H1 (cell line): ENCODE measurements at regions of chr9 and their contacts with region 1.

Region 1: GRCh38 chr9:121322037-121322775 is 47.8 kb downstream of the STOM start:
- DNase-seq: no peak
- H3K4me3 ChIP-seq: no peak overlapping the region
- H3K27ac ChIP-seq: no peak overlapping the region
- H3K4me1 ChIP-seq: no peaks in the 10 kb centered on the region
- H3K27me3 ChIP-seq: no peaks in the 10 kb centered on the region
- CTCF ChIP-seq: no peak
- EP300 ChIP-seq: no peak
- POLR2A ChIP-seq: no peak
- RAD21 ChIP-seq: no peak

Region 2: GRCh38 chr9:120730661-120731514 is 591.3 kb before region 1 on chr9:
- CTCF ChIA-PET with region 1: no interaction called
- POLR2A ChIA-PET with region 1: no interaction called
- DNase-seq: no peak
- H3K4me3 ChIP-seq: no peak overlapping the region
- H3K27ac ChIP-seq: no peak overlapping the region; the same call in 1 of the 2 replicates
- H3K4me1 ChIP-seq: peaks cover 0 to 6% (median 0%) of the 10 kb centered on the region in 4 experiments; a peak in 3 of 7 replicates
- H3K27me3 ChIP-seq: no peaks in the 10 kb centered on the region
- CTCF ChIP-seq: no peak
- EP300 ChIP-seq: no peak
- POLR2A ChIP-seq: no peak
- RAD21 ChIP-seq: no peak

Region 3: GRCh38 chr9:121213136-121213806 is 108.9 kb before region 1 on chr9:
- CTCF ChIA-PET with region 1: interaction called, 34 read pairs
- POLR2A ChIA-PET with region 1: interaction called, 3 read pairs
- DNase-seq: peak; percentile 74 to 93
- H3K4me3 ChIP-seq: no peak overlapping the region
- H3K27ac ChIP-seq: no peak overlapping the region
- H3K4me1 ChIP-seq: peaks cover 0 to 6% (median 1%) of the 10 kb centered on the region in 4 experiments; a peak in 3 of 7 replicates
- H3K27me3 ChIP-seq: no peaks in the 10 kb centered on the region
- CTCF ChIP-seq: peak; percentile 96 to 98 (median 98)
- EP300 ChIP-seq: no peak
- POLR2A ChIP-seq: no peak
- RAD21 ChIP-seq: peak; percentile 100

Region 4: DNA sequence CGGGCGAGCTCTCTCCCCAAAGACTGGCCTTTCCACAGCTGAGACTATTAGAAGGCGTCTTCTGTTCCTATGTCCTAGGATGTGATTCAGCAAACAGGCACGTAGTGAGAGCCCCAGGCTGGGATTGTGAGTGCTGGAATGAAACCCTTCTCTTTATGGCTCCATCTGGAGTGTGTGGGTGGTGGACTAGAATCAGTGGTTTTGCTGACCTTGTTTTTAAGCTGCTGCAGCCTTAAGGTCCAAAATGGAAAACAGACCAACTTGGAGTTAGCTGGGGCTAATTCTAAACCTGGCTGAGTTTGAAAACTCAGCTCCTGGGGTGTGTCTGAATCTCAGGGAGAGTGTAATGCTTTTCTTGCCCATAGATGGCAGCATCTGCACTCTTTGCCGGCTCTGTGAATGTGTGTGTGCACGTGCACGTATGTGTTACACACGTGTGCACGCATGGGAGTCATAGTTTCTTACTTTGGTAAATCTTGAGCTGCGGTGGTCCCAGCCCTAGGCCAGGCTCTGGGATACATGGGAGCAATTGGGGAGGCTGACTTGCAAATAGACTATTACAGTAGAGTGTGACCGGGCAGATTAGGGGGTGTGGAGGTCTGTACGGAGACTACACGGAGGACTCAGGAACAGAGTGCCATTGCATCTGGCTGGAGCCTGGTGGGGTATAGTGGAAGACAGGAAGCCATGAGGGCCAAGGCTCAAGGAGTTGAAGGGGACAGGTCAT is 43.5 kb before region 1 on chr9:
- CTCF ChIA-PET with region 1: interaction called, 20 read pairs
- POLR2A ChIA-PET with region 1: no interaction called
- DNase-seq: no peak
- H3K4me3 ChIP-seq: no peak overlapping the region
- H3K27ac ChIP-seq: no peak overlapping the region
- H3K4me1 ChIP-seq: peaks cover 0 to 5% (median 2%) of the 10 kb centered on the region in 4 experiments; a peak in 3 of 7 replicates
- H3K27me3 ChIP-seq: peaks cover 6 to 47% (median 39%) of the 10 kb centered on the region in 4 experiments
- CTCF ChIP-seq: peak; percentile 64 to 84 (median 66)
- EP300 ChIP-seq: no peak
- POLR2A ChIP-seq: no peak
- RAD21 ChIP-seq: peak; percentile 73 to 78

Region 5: GRCh38 chr9:121305269-121305994 is 16.8 kb before region 1 on chr9:
- CTCF ChIA-PET with region 1: interaction called, 35 read pairs
- POLR2A ChIA-PET with region 1: no interaction called
- DNase-seq: no peak
- H3K4me3 ChIP-seq: no peak overlapping the region
- H3K27ac ChIP-seq: no peak overlapping the region
- H3K4me1 ChIP-seq: peaks cover 2 to 10% (median 4%) of the 10 kb centered on the region in 4 experiments; a peak in 6 of 7 replicates
- H3K27me3 ChIP-seq: peaks cover 5 to 14% (median 9%) of the 10 kb centered on the region in 4 experiments
- CTCF ChIP-seq: no peak
- EP300 ChIP-seq: no peak
- POLR2A ChIP-seq: no peak
- RAD21 ChIP-seq: no peak

Region 6: DNA sequence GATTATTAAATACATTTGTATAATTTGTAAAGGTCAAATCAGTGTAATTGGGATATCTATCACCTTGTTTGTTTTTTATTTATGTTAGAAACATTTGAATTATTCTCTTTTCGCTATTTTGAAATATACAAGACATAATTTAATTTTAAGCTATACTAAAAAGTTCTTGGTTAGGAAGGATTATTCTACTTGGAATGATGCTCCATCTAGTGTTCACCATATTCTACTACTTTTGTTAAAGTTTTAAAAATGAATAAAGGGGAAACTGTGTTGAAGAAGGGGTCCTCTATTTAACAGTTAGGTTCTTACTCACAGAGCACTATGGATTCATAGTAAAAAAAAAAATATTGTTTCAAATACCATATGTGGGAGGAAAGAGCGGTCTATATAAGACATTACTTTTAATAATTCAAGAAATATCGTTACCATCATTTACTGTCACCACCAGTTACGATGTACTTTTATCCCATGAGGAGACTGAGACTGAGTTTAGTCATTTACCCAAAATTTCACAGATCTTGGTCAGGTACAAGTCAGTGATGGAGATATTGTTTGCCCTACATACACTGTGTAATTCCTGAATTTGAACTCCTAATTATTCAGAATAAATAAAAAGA is 54.1 kb after region 1 on chr9:
- CTCF ChIA-PET with region 1: interaction called, 27 read pairs
- POLR2A ChIA-PET with region 1: no interaction called
- DNase-seq: no peak
- H3K4me3 ChIP-seq: no peak overlapping the region
- H3K27ac ChIP-seq: no peak overlapping the region
- H3K4me1 ChIP-seq: no peaks in the 10 kb centered on the region
- H3K27me3 ChIP-seq: no peaks in the 10 kb centered on the region
- CTCF ChIP-seq: no peak
- EP300 ChIP-seq: no peak
- POLR2A ChIP-seq: no peak
- RAD21 ChIP-seq: 0 out of 4 replicates have a peak, but pooled peaks of 1 of the 2 experiments have one; percentile 1

Region 7: GRCh38 chr9:121399883-121400607 is 77.8 kb after region 1 on chr9:
- CTCF ChIA-PET with region 1: interaction called, 197 read pairs
- POLR2A ChIA-PET with region 1: no interaction called
- DNase-seq: no peak
- H3K4me3 ChIP-seq: no peak overlapping the region
- H3K27ac ChIP-seq: no peak overlapping the region
- H3K4me1 ChIP-seq: peaks cover 0 to 6% (median 0%) of the 10 kb centered on the region in 4 experiments; a peak in 1 of 7 replicates
- H3K27me3 ChIP-seq: no peaks in the 10 kb centered on the region
- CTCF ChIP-seq: peak in 2 of 3 experiments; percentile 49 to 61; a peak in 2 of 4 replicates
- EP300 ChIP-seq: no peak
- POLR2A ChIP-seq: no peak
- RAD21 ChIP-seq: peak; percentile 77 to 84

Region 8: GRCh38 chr9:121545875-121546423 is 223.7 kb after region 1 on chr9:
- CTCF ChIA-PET with region 1: no interaction called
- POLR2A ChIA-PET with region 1: no interaction called
- DNase-seq: peak; percentile 87 to 97
- H3K4me3 ChIP-seq: peak overlapping the region in 1 of 4 experiments; percentile 42; a peak in 3 of 8 replicates
- H3K27ac ChIP-seq: no peak overlapping the region
- H3K4me1 ChIP-seq: peaks cover 0 to 5% (median under 1%) of the 10 kb centered on the region in 4 experiments; a peak in 2 of 7 replicates
- H3K27me3 ChIP-seq: peaks cover 0 to 6% (median 4%) of the 10 kb centered on the region in 4 experiments; a peak in 3 of 7 replicates
- CTCF ChIP-seq: peak; percentile 93 to 98 (median 97)
- EP300 ChIP-seq: peak in 1 of 2 experiments; percentile 22; a peak in 1 of 3 replicates
- POLR2A ChIP-seq: no peak
- RAD21 ChIP-seq: peak; percentile 95 to 99